MCF 10A (cell line): ENCODE measurements at regions of chr9 and their contacts with region 1.

Region 1: GRCh38 chr9:131349881-131350563 is 43.9 kb upstream of the PRRC2B start:
- DNase-seq: peak; percentile 79
- H3K4me3 Mint-ChIP-seq: no peak overlapping the region
- H3K27ac Mint-ChIP-seq: peak overlapping the region; percentile 84
- H3K4me1 Mint-ChIP-seq: no peaks in the 10 kb centered on the region
- H3K27me3 Mint-ChIP-seq: no peaks in the 10 kb centered on the region
- CTCF ChIP-seq: peak; percentile 77

Region 2: DNA sequence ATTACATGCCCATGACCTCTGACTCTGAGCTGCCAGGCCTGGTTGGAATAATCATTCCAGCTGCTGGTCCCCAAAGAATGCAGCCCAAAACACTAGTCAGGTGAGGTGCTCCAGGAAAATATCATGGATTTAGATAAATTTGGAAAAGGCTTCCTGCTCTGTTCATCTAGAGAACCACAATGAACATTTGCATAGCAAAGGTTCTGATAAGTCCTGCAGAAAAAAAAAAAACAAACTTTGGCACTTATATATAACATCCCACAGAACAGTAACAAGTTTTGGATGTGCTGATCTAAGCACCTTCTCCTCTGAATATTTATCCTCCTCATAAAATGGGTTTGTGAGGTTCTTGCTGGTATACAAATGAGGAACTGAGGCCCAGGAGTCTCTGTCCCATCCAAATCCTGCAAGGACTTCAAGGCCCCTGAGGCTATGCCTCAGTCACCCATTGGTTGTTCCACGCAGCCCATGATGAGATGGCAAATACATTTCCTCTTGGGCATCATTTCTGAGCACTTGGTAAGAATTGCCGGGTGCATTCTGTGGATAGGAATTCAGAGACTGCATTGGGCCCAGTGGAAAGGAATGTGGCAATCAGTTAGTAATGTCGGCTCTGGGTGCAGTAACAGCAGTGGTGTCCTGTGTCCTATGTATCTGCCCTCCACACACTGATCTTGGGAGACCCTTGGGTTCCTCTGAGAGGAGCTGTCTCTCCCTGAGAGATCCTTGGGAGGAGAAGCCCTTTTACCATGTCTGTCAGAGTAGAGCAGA is 978.6 kb before region 1 on chr9:
- CTCF ChIA-PET with region 1: no interaction called
- POLR2A ChIA-PET with region 1: no interaction called
- intact Hi-C with region 1: no loop called
- DNase-seq: no peak
- H3K4me3 Mint-ChIP-seq: no peak overlapping the region
- H3K27ac Mint-ChIP-seq: no peak overlapping the region
- H3K4me1 Mint-ChIP-seq: peaks cover 6% of the 10 kb centered on the region
- H3K27me3 Mint-ChIP-seq: no peaks in the 10 kb centered on the region
- CTCF ChIP-seq: no peak

Region 3: GRCh38 chr9:130997925-130998596 is 352.0 kb before region 1 on chr9:
- CTCF ChIA-PET with region 1: no interaction called
- POLR2A ChIA-PET with region 1: no interaction called
- intact Hi-C with region 1: no loop called
- DNase-seq: peak; percentile 73
- H3K4me3 Mint-ChIP-seq: no peak overlapping the region
- H3K27ac Mint-ChIP-seq: no peak overlapping the region
- H3K4me1 Mint-ChIP-seq: peaks cover 18% of the 10 kb centered on the region
- H3K27me3 Mint-ChIP-seq: peaks cover 17% of the 10 kb centered on the region
- CTCF ChIP-seq: peak; percentile 89

Region 4: GRCh38 chr9:131334629-131335367 is 15.2 kb before region 1 on chr9:
- CTCF ChIA-PET with region 1: interaction called, 12 read pairs
- POLR2A ChIA-PET with region 1: no interaction called
- intact Hi-C with region 1: no loop called
- DNase-seq: no peak
- H3K4me3 Mint-ChIP-seq: no peak overlapping the region
- H3K27ac Mint-ChIP-seq: no peak overlapping the region
- H3K4me1 Mint-ChIP-seq: no peaks in the 10 kb centered on the region
- H3K27me3 Mint-ChIP-seq: peaks cover 2% of the 10 kb centered on the region
- CTCF ChIP-seq: no peak

Region 5: GRCh38 chr9:131407717-131408195 is 57.7 kb after region 1 on chr9:
- CTCF ChIA-PET with region 1: interaction called, 22 read pairs
- POLR2A ChIA-PET with region 1: interaction called, 4 read pairs
- intact Hi-C with region 1: no loop called
- DNase-seq: peak; percentile 67
- H3K4me3 Mint-ChIP-seq: peak overlapping the region; percentile 54
- H3K27ac Mint-ChIP-seq: peak overlapping the region; percentile 49
- H3K4me1 Mint-ChIP-seq: peaks cover 63% of the 10 kb centered on the region
- H3K27me3 Mint-ChIP-seq: no peaks in the 10 kb centered on the region
- CTCF ChIP-seq: peak; percentile 23

Region 6: GRCh38 chr9:131432597-131433306 is 82.7 kb after region 1 on chr9:
- CTCF ChIA-PET with region 1: interaction called, 13 read pairs
- POLR2A ChIA-PET with region 1: no interaction called
- intact Hi-C with region 1: no loop called
- DNase-seq: peak; percentile 38
- H3K4me3 Mint-ChIP-seq: no peak overlapping the region
- H3K27ac Mint-ChIP-seq: peak overlapping the region; percentile 35
- H3K4me1 Mint-ChIP-seq: no peaks in the 10 kb centered on the region
- H3K27me3 Mint-ChIP-seq: no peaks in the 10 kb centered on the region
- CTCF ChIP-seq: no peak

Region 7: GRCh38 chr9:131747356-131747755 is 397.3 kb after region 1 on chr9:
- CTCF ChIA-PET with region 1: interaction called, 3 read pairs
- POLR2A ChIA-PET with region 1: interaction called, 7 read pairs
- intact Hi-C with region 1: loop called (anchors 2 kb)
- DNase-seq: peak; percentile 58
- H3K4me3 Mint-ChIP-seq: no peak overlapping the region
- H3K27ac Mint-ChIP-seq: no peak overlapping the region
- H3K4me1 Mint-ChIP-seq: peaks cover 4% of the 10 kb centered on the region
- H3K27me3 Mint-ChIP-seq: peaks cover 11% of the 10 kb centered on the region
- CTCF ChIP-seq: peak; percentile 65